Activated CD4-positive, alpha-beta T cell treated with anti-CD3 and anti-CD28 coated beads for 36 hours (primary cell): ENCODE measurements at regions of chr9 and their contacts with region 1.

Region 1: DNA sequence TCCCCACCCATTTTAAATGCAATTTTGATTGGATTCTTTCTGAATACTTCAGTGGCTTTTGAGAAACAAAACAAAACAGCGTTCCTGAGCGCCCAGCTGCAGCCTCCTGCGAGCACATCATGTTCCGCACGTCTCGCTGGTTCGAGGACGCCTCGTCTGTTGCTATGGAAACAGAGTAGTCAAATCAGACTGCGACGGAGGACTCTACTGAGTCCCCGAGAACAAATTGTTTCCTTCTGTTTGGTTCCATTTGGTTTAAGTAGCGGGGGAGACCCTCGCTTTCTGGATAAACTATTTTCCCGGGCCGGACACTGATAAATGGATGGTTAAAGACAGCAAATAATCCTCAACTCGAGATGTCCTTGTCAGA is 69.0 kb downstream of the SLC28A3 start:
- DNase-seq: peak; percentile 87
- ATAC-seq: peak; percentile 98
- H3K4me3 Mint-ChIP-seq: peak overlapping the region; percentile 72
- H3K27ac Mint-ChIP-seq: peak overlapping the region; percentile 67
- H3K4me1 Mint-ChIP-seq: peaks cover 7% of the 10 kb centered on the region
- H3K27me3 Mint-ChIP-seq: peaks cover 32% of the 10 kb centered on the region

Region 2: GRCh38 chr9:84296146-84296843 is 24.8 kb after region 1 on chr9:
- CTCF ChIA-PET with region 1: interaction called, 4 read pairs
- POLR2A ChIA-PET with region 1: no interaction called
- intact Hi-C with region 1: loop called (anchors 1 to 2 kb)
- DNase-seq: peak; percentile 79
- ATAC-seq: peak; percentile 82
- H3K4me3 Mint-ChIP-seq: peak overlapping the region; percentile 46
- H3K27ac Mint-ChIP-seq: peak overlapping the region; percentile 98
- H3K4me1 Mint-ChIP-seq: peaks cover 60% of the 10 kb centered on the region
- H3K27me3 Mint-ChIP-seq: no peaks in the 10 kb centered on the region